PC-3 (cell line): ENCODE measurements at regions of chr1 and their contacts with region 1.

Region 1: GRCh38 chr1:248884632-248885295 is 21.3 kb upstream of the PGBD2 start:
- DNase-seq: no peak
- ATAC-seq: peak; percentile 31; the same call in 1 of the 2 replicates
- H3K4me3 ChIP-seq: no peak overlapping the region
- H3K27ac ChIP-seq: no peak overlapping the region
- H3K4me1 ChIP-seq: no peaks in the 10 kb centered on the region
- H3K27me3 ChIP-seq: no peaks in the 10 kb centered on the region
- CTCF ChIP-seq: peak; percentile 53; the same call in 1 of the 2 replicates

Region 2: GRCh38 chr1:248670003-248670402 is 214.8 kb before region 1 on chr1:
- CTCF ChIA-PET with region 1: no interaction called
- POLR2A ChIA-PET with region 1: interaction called, 12 read pairs
- intact Hi-C with region 1: no loop called
- DNase-seq: peak; percentile 46
- ATAC-seq: no peak
- H3K4me3 ChIP-seq: no peak overlapping the region
- H3K27ac ChIP-seq: no peak overlapping the region
- H3K4me1 ChIP-seq: no peaks in the 10 kb centered on the region
- H3K27me3 ChIP-seq: no peaks in the 10 kb centered on the region
- CTCF ChIP-seq: no peak

Region 3: GRCh38 chr1:248924696-248925532 is 40.1 kb after region 1 on chr1:
- CTCF ChIA-PET with region 1: no interaction called
- POLR2A ChIA-PET with region 1: no interaction called
- intact Hi-C with region 1: loop called (anchors 1 kb)
- DNase-seq: peak; percentile 77
- ATAC-seq: peak; percentile 97
- H3K4me3 ChIP-seq: no peak overlapping the region
- H3K27ac ChIP-seq: peak overlapping the region; percentile 89; the same call in 1 of the 2 replicates
- H3K4me1 ChIP-seq: peaks cover 29% of the 10 kb centered on the region
- H3K27me3 ChIP-seq: no peaks in the 10 kb centered on the region
- CTCF ChIP-seq: peak; percentile 92